Mammary epithelial cell (primary cell): ENCODE measurements at regions of chr2 and their contacts with region 1.

Region 1: DNA sequence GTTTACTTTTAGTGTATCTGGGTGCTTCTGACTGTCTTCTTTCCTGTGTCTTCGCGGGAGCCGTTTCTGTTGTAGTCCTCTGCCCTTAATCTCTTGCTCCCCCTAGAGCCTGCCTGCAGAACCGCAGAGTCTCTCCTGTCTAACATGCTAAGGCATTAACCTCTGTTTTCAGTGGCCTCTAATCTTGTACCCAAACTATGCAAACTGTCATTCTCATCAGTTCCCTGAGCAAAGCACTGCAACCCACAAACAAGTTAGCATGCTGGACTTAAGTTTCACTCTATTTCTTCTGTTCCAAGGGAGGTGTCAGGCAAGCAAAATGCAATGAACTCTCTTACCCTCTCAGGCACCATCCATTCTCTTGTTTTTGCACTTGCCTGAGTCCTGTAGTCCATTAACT is 138.4 kb downstream of the OTX1 start:
- DNase-seq: peak; percentile 41
- H3K4me3 ChIP-seq: no peak overlapping the region
- H3K27ac ChIP-seq: no peak overlapping the region
- H3K4me1 ChIP-seq: no peaks in the 10 kb centered on the region
- H3K27me3 ChIP-seq: no peaks in the 10 kb centered on the region
- CTCF ChIP-seq: peak; percentile 95 to 97

Region 2: GRCh38 chr2:62939735-62940491 is 249.1 kb before region 1 on chr2:
- CTCF ChIA-PET with region 1: no interaction called
- dilution Hi-C with region 1: no loop called
- in situ Hi-C with region 1: no loop called
- intact Hi-C with region 1: loop called (anchors 10 kb)
- DNase-seq: peak; percentile 92
- H3K4me3 ChIP-seq: no peak overlapping the region
- H3K27ac ChIP-seq: no peak overlapping the region
- H3K4me1 ChIP-seq: peaks cover 9% of the 10 kb centered on the region
- H3K27me3 ChIP-seq: no peaks in the 10 kb centered on the region
- CTCF ChIP-seq: no peak